Thyroid gland (tissue), 4 donors: ENCODE measurements at regions of chr3 and their contacts with region 1.

Region 1: DNA sequence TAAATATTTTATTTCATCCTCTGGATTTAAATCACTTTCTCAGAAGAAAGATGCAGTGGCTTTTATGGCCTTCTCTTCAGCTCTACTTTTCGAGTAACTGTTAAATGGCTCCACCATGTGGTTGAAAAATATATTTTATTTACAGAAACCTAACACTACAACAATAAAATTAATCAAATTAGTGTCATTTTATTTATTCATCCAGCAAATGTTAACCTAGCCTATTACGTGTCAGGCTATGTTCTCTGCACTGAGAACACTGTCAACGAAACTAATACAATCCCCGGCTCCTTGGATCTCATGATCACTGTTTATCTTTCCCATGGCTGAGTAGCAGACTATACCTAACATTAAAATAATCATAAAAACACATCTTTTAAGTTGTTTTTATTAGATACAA is 148.0 kb upstream of the OSTN start:
- DNase-seq: no peak
- H3K4me3 ChIP-seq: no peak overlapping the region
- H3K27ac ChIP-seq: no peak overlapping the region
- H3K4me1 ChIP-seq: no peaks in the 10 kb centered on the region
- H3K27me3 ChIP-seq: no peaks in the 10 kb centered on the region
- CTCF ChIP-seq: peak in 4 of 6 experiments; percentile 26 to 65 (median 57)
- POLR2A ChIP-seq: no peak

Region 2: DNA sequence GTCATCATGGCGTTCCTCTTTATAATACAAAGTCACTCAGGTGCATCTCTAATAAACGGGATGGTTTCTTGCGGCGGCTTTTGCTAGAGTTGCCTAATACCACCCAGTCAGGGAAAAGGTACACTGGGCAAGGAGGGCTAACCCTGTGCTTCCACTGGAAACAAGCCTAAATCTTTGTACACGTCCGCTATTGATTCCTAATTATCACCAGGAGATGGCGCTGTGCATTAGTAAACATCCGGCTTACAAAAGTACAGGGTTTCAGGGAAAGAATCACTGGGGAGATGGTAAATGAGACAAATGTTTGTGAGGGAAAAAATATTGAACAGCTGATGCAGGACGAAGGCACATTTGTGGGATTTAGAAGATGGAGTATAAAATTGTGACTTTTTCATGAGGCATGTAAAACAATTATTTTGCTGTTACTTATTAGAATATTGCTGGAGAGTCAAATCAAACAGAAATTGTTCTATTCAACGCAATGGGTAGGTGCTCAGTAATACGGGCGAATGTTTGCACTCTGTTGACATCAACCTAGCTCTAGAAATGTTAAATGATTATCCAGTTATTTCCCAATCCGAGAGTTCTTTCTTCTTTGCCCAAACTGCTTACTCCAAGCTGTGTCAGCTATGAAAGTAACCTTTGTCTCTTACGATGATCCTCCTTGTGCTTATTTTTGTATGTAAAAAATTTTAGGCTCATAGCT is 239.1 kb before region 1 on chr3:
- intact Hi-C with region 1: loop called (anchors 10 kb)
- DNase-seq: peak; percentile 50 to 56
- H3K4me3 ChIP-seq: no peak overlapping the region
- H3K27ac ChIP-seq: no peak overlapping the region
- H3K4me1 ChIP-seq: peaks cover 25 to 26% of the 10 kb centered on the region in 2 donors
- H3K27me3 ChIP-seq: no peaks in the 10 kb centered on the region
- CTCF ChIP-seq: peak; percentile 30 to 68 (median 63)
- POLR2A ChIP-seq: no peak

Region 3: GRCh38 chr3:190883973-190884832 is 166.8 kb before region 1 on chr3:
- intact Hi-C with region 1: no loop called
- DNase-seq: peak; percentile 29 to 44
- H3K4me3 ChIP-seq: no peak overlapping the region
- H3K27ac ChIP-seq: no peak overlapping the region
- H3K4me1 ChIP-seq: no peaks in the 10 kb centered on the region
- H3K27me3 ChIP-seq: no peaks in the 10 kb centered on the region
- CTCF ChIP-seq: peak; percentile 49 to 83 (median 76)
- POLR2A ChIP-seq: no peak

Region 4: GRCh38 chr3:191176038-191176785 is 125.2 kb after region 1 on chr3:
- intact Hi-C with region 1: no loop called
- DNase-seq: no peak
- H3K4me3 ChIP-seq: no peak overlapping the region
- H3K27ac ChIP-seq: no peak overlapping the region
- H3K4me1 ChIP-seq: no peaks in the 10 kb centered on the region
- H3K27me3 ChIP-seq: no peaks in the 10 kb centered on the region
- CTCF ChIP-seq: no peak
- POLR2A ChIP-seq: no peak